ENCODE measurements at regions of chr9 and their contacts with region 1.

Region 1: GRCh38 chr9:122835313-122835731 is 6.9 kb upstream of the PDCL start:
- DNase-seq: peak; percentile 57
- H3K4me3 Mint-ChIP-seq: peak overlapping the region; percentile 29
- H3K27ac Mint-ChIP-seq: peak overlapping the region; percentile 84
- H3K4me1 Mint-ChIP-seq: peaks cover 26% of the 10 kb centered on the region
- H3K27me3 Mint-ChIP-seq: peaks cover 8% of the 10 kb centered on the region

Region 2: GRCh38 chr9:122991370-122991830 is 156.1 kb after region 1 on chr9:
- CTCF ChIA-PET with region 1: interaction called, 10 read pairs
- DNase-seq: peak; percentile 42
- H3K4me3 Mint-ChIP-seq: no peak overlapping the region
- H3K27ac Mint-ChIP-seq: no peak overlapping the region
- H3K4me1 Mint-ChIP-seq: peaks cover 4% of the 10 kb centered on the region
- H3K27me3 Mint-ChIP-seq: no peaks in the 10 kb centered on the region

Measured in activated naive CD4-positive, alpha-beta T cell treated with anti-CD3 and anti-CD28 coated beads, Interleukin-2, amount 10 ng/mL, durations not matched to agents 7 days and 5 days (primary cell).